Activated CD4-positive, alpha-beta T cell treated with anti-CD3 and anti-CD28 coated beads for 36 hours (primary cell): ENCODE measurements at regions of chr17 and their contacts with region 1.

Region 1: GRCh38 chr17:7252176-7253043 is at the start of gene ELP5:
- DNase-seq: peak; percentile 94
- ATAC-seq: peak; percentile 65
- H3K4me3 Mint-ChIP-seq: peak within 1 kb of the TSS; percentile 93
- H3K27ac Mint-ChIP-seq: peak within 1 kb of the TSS; percentile 99
- H3K4me1 Mint-ChIP-seq: peaks cover 40% of the 10 kb centered on the region
- H3K27me3 Mint-ChIP-seq: no peaks in the 10 kb centered on the region
- total RNA-seq, gene ELP5: 58.1 to 62.3 TPM

Region 2: DNA sequence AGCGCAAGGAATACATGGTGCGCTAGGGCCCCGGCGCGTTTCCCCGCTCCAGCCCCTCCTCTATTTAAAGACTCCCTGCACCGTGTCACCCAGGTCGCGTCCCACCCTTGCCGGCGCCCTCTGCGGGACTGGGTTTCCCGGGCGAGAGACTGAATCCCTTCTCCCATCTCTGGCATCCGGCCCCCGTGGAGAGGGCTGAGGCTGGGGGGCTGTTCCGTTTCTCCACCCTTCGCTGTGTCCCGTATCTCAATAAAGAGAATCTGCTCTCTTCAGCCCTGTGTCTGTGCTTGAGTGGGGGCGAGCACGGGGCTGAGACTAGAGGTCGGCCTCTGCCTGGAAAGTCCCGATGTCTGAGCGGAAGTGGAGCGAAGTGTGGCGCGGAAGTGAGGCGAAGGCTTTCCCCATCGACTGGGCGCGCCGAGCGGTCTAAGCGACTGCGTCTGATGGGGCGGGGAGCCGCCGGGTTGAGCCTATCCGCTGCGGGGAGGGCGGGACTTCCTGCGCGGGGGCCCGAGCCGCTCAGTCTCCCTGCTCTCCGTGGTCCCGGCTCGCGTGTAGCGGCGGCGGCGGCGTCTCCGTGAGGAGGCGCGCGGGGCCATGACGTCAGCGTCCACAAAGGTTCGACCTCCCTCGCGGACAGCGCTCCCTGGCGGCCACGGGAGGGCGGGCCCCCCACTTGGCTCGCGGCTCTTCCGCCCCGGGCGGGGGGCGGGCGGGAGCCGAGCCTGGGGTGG is 238.0 kb before region 1 on chr17:
- CTCF ChIA-PET with region 1: no interaction called
- POLR2A ChIA-PET with region 1: no interaction called
- intact Hi-C with region 1: loop called in 1 of 2 experiments (anchors 1 kb)
- DNase-seq: peak; percentile 99
- ATAC-seq: peak; percentile 88
- H3K4me3 Mint-ChIP-seq: peak overlapping the region; percentile 92
- H3K27ac Mint-ChIP-seq: peak overlapping the region; percentile 99
- H3K4me1 Mint-ChIP-seq: peaks cover 54% of the 10 kb centered on the region
- H3K27me3 Mint-ChIP-seq: no peaks in the 10 kb centered on the region

Region 3: DNA sequence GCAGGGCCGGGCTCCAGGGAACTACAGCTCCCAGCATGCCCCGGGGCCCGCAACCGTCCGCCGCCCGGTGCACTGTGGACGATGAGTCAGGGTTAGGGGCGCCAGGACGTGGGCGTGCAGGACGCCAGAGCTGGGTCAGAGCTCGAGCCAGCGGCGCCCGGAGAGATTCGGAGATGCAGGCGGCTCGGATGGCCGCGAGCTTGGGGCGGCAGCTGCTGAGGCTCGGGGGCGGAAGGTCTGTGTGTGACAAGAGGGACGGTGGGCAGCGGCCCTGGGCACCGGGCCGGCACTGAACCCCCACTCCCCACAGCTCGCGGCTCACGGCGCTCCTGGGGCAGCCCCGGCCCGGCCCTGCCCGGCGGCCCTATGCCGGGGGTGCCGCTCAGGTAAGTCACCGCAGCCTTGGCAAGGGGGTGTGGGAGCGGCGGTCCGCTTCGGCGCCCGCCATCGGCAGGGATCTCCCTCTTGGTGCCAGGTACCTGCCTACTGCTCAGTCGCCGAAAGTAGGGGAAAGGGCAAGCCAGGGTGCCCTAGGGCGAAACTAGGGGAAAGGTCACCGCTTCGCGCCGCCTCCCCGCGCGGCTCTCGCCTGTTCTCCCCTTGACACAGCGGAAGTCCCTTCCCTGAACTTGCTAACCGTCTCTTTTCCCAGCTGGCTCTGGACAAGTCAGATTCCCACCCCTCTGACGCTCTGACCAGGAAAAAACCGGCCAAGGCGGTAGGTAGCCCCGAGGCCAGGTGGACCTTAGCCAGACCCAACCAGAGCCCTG is 32.4 kb before region 1 on chr17 and contains the starts of genes ACADVL and DLG4:
- CTCF ChIA-PET with region 1: interaction called, 5 read pairs
- POLR2A ChIA-PET with region 1: no interaction called
- intact Hi-C with region 1: loop called (anchors 1 to 2 kb)
- DNase-seq: peak; percentile 94
- ATAC-seq: peak; percentile 73
- H3K4me3 Mint-ChIP-seq: peak within 1 kb of the TSS; percentile 89
- H3K27ac Mint-ChIP-seq: peak within 1 kb of the TSS; percentile 96
- H3K4me1 Mint-ChIP-seq: peaks cover 48% of the 10 kb centered on the region
- H3K27me3 Mint-ChIP-seq: no peaks in the 10 kb centered on the region
- total RNA-seq, gene ACADVL: 263 to 345 TPM
- total RNA-seq, gene DLG4: 11.7 to 15.4 TPM

Region 4: GRCh38 chr17:7239091-7240027 is 13.1 kb before region 1 on chr17 and contains the start of gene PHF23:
- CTCF ChIA-PET with region 1: interaction called, 4 read pairs
- POLR2A ChIA-PET with region 1: interaction called, 8 read pairs
- intact Hi-C with region 1: loop called (anchors 1 kb)
- DNase-seq: peak; percentile 99
- ATAC-seq: peak; percentile 74
- H3K4me3 Mint-ChIP-seq: peak within 1 kb of the TSS; percentile 97
- H3K27ac Mint-ChIP-seq: peak within 1 kb of the TSS; percentile 93
- H3K4me1 Mint-ChIP-seq: peaks cover 61% of the 10 kb centered on the region
- H3K27me3 Mint-ChIP-seq: no peaks in the 10 kb centered on the region
- total RNA-seq, gene PHF23: 23.6 to 35.2 TPM

Region 5: GRCh38 chr17:7306911-7307686 is 54.7 kb after region 1 on chr17 and contains the start of gene EIF5A:
- CTCF ChIA-PET with region 1: no interaction called
- POLR2A ChIA-PET with region 1: no interaction called
- intact Hi-C with region 1: loop called (anchors 1 to 5 kb)
- DNase-seq: peak; percentile 100
- ATAC-seq: peak; percentile 86
- H3K4me3 Mint-ChIP-seq: peak within 1 kb of the TSS; percentile 96
- H3K27ac Mint-ChIP-seq: peak within 1 kb of the TSS; percentile 100
- H3K4me1 Mint-ChIP-seq: peaks cover 36% of the 10 kb centered on the region
- H3K27me3 Mint-ChIP-seq: no peaks in the 10 kb centered on the region
- total RNA-seq, gene EIF5A: 780 to 934 TPM

Region 6: DNA sequence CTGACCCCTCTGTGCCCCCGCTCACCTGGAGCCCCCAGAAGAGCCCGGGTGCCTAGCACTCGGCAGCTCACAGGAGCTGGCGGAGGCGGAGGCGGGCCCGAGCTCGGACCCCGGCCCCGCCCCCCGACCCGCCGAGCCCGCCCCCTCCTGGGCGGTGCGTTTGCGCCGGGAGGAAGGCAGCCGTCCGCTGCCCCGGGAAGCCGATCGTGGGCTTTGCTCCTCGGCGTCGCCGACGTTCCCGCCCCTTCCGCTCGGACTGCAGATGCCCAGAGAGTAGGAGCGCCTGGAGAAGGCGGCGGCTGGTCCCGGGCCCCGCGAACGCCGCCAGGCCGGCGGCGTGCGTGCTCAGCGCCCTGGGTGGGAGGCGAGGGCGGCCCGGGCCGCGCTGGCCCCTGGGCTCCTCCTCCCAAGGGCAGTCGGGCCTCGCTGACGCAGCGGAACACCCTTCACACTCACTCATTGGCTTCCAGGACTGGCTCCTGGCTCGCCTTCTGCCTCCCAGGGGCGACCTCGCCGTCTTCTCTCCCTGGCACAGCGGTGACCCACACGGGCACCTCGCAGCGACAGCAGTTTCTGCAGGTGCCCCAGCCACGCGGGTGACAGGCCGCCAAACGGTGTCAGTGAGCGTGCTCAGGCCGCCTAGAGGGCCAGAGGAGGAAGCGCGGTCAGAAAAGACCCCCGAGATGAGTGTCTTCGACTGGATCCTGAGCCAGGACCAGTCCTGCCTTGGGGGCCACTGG is 142.2 kb after region 1 on chr17 and contains the start of gene PLSCR3:
- CTCF ChIA-PET with region 1: no interaction called
- POLR2A ChIA-PET with region 1: no interaction called
- intact Hi-C with region 1: loop called in 1 of 2 experiments (anchors 2 kb)
- DNase-seq: peak; percentile 90
- ATAC-seq: peak; percentile 86
- H3K4me3 Mint-ChIP-seq: peak within 1 kb of the TSS; percentile 88
- H3K27ac Mint-ChIP-seq: peak within 1 kb of the TSS; percentile 95
- H3K4me1 Mint-ChIP-seq: peaks cover 26% of the 10 kb centered on the region
- H3K27me3 Mint-ChIP-seq: no peaks in the 10 kb centered on the region
- total RNA-seq, gene PLSCR3: 69.3 to 78.9 TPM

Region 7: DNA sequence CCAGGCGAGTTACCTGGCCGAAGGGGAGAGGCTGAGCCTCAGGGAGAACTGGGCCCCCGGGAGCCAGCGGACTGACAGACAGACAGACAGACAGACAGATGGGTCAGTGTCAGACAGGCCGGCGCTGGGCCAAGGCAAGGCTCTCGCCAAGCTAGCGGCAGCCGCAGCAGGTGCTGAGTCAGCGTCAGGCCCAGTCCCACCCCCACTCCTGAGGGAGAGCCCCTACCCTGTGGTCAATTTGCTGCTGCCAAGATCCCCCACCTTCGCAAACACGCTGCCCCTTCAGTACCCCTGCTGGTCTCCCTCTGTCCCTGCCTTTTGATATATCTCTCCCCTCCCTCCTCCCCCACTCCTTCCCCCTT is 188.4 kb after region 1 on chr17:
- CTCF ChIA-PET with region 1: no interaction called
- POLR2A ChIA-PET with region 1: no interaction called
- intact Hi-C with region 1: no loop called
- DNase-seq: peak; percentile 62
- ATAC-seq: no peak
- H3K4me3 Mint-ChIP-seq: peak overlapping the region; percentile 79
- H3K27ac Mint-ChIP-seq: no peak overlapping the region
- H3K4me1 Mint-ChIP-seq: peaks cover 43% of the 10 kb centered on the region
- H3K27me3 Mint-ChIP-seq: peaks cover 41% of the 10 kb centered on the region

Region 8: DNA sequence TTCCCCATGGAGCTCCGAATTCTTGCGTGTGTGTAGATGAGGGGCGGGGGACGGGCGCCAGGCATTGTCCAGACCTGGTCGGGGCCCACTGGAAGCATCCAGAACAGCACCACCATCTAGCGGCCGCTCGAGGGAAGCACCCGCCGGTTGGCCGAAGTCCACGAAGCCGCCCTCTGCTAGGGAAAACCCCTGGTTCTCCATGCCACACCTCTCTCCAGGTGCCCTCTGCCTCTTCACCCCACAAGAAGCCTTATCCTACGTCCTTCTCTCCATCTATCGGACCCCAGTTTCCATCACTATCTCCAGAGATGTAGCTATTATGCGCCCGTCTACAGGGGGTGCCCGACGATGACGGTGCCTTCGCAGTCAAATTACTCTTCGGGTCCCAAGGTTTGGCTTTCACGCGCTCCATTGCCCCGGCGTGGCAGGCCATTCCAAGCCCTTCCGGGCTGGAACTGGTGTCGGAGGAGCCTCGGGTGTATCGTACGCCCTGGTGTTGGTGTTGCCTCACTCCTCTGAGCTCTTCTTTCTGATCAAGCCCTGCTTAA is 308.7 kb after region 1 on chr17:
- CTCF ChIA-PET with region 1: no interaction called
- POLR2A ChIA-PET with region 1: no interaction called
- intact Hi-C with region 1: loop called in 1 of 2 experiments (anchors 1 kb)
- DNase-seq: peak; percentile 92
- ATAC-seq: peak; percentile 75
- H3K4me3 Mint-ChIP-seq: peak overlapping the region; percentile 79
- H3K27ac Mint-ChIP-seq: peak overlapping the region; percentile 87
- H3K4me1 Mint-ChIP-seq: peaks cover 46% of the 10 kb centered on the region
- H3K27me3 Mint-ChIP-seq: no peaks in the 10 kb centered on the region